IMR-90 (cell line): ENCODE measurements at regions of chr17 and their contacts with region 1.

Region 1: GRCh38 chr17:29379084-29379991 is 10.8 kb upstream of the TAOK1 start:
- DNase-seq: no peak
- ATAC-seq: no peak
- H3K4me3 ChIP-seq: no peak overlapping the region
- H3K27ac ChIP-seq: no peak overlapping the region
- H3K4me1 ChIP-seq: peaks cover 5% of the 10 kb centered on the region; the same call in 1 of the 2 replicates
- H3K27me3 ChIP-seq: no peaks in the 10 kb centered on the region
- CTCF ChIP-seq: no peak
- POLR2A ChIP-seq: no peak
- RAD21 ChIP-seq: no peak

Region 2: GRCh38 chr17:28265581-28266541 is 1113.5 kb before region 1 on chr17:
- CTCF ChIA-PET with region 1: no interaction called
- POLR2A ChIA-PET with region 1: interaction called, 18 read pairs
- dilution Hi-C with region 1: no loop called
- in situ Hi-C with region 1: no loop called
- intact Hi-C with region 1: no loop called
- DNase-seq: no peak
- ATAC-seq: no peak
- H3K4me3 ChIP-seq: no peak overlapping the region
- H3K27ac ChIP-seq: no peak overlapping the region
- H3K4me1 ChIP-seq: no peaks in the 10 kb centered on the region
- H3K27me3 ChIP-seq: peaks cover 7% of the 10 kb centered on the region
- CTCF ChIP-seq: no peak
- POLR2A ChIP-seq: no peak
- RAD21 ChIP-seq: no peak

Region 3: GRCh38 chr17:29157310-29157709 is 222.0 kb before region 1 on chr17:
- CTCF ChIA-PET with region 1: no interaction called
- POLR2A ChIA-PET with region 1: interaction called, 10 read pairs
- dilution Hi-C with region 1: no loop called
- in situ Hi-C with region 1: no loop called
- intact Hi-C with region 1: no loop called
- DNase-seq: no peak
- ATAC-seq: no peak
- H3K4me3 ChIP-seq: no peak overlapping the region
- H3K27ac ChIP-seq: peak overlapping the region; percentile 46; the same call in 1 of the 2 replicates
- H3K4me1 ChIP-seq: peaks cover 61% of the 10 kb centered on the region
- H3K27me3 ChIP-seq: no peaks in the 10 kb centered on the region
- CTCF ChIP-seq: no peak
- POLR2A ChIP-seq: no peak
- RAD21 ChIP-seq: no peak

Region 4: GRCh38 chr17:29212681-29213121 is 166.6 kb before region 1 on chr17:
- CTCF ChIA-PET with region 1: no interaction called
- POLR2A ChIA-PET with region 1: no interaction called
- dilution Hi-C with region 1: no loop called
- in situ Hi-C with region 1: no loop called
- intact Hi-C with region 1: no loop called
- DNase-seq: peak; percentile 6
- ATAC-seq: no peak
- H3K4me3 ChIP-seq: no peak overlapping the region
- H3K27ac ChIP-seq: no peak overlapping the region
- H3K4me1 ChIP-seq: peaks cover 2% of the 10 kb centered on the region; the same call in 1 of the 2 replicates
- H3K27me3 ChIP-seq: 0 out of 2 replicates have a peak, but pooled peaks cover 2% of the 10 kb centered on the region
- CTCF ChIP-seq: no peak
- POLR2A ChIP-seq: no peak
- RAD21 ChIP-seq: no peak

Region 5: DNA sequence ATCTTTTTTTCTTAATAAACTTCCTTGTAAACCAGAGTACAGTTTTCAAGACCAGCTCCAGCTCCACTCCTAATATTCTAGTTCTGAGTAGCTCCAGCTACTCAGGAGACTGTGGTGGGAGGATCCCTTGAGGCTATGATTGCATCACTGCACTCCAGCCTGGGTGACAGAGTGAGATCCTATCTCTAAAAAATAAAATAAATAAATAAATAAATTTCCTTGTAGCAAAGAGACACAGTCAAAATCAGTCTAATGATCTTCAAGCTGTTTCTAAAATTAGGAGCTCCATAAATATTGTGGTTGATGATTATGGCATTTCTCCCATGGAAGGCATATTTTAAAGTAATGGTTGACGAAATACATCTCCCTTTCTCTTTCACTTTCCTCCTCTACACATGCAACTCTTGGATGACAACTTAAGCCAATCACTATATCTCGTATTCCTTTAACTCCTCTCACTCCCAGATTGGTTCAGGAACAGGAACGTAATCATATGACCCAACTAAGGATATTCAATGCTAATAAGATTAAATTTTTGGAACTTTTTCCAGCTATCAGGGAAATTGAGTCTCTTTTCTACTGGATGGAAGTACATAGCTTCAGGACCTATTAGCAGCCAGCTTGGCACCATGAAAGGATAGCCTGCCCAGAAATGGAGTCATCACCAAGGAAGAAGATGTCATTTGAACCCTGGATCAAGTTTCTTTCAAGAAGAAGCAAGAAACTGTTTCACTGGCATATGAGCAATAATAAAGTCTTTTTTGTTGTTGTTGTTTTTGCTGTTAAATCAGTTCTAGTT is 31.3 kb before region 1 on chr17:
- CTCF ChIA-PET with region 1: no interaction called
- POLR2A ChIA-PET with region 1: no interaction called
- dilution Hi-C with region 1: no loop called
- in situ Hi-C with region 1: no loop called
- intact Hi-C with region 1: no loop called
- DNase-seq: no peak
- ATAC-seq: no peak; the same call in 1 of the 2 replicates
- H3K4me3 ChIP-seq: no peak overlapping the region
- H3K27ac ChIP-seq: no peak overlapping the region
- H3K4me1 ChIP-seq: no peaks in the 10 kb centered on the region
- H3K27me3 ChIP-seq: peaks cover 6% of the 10 kb centered on the region
- CTCF ChIP-seq: no peak
- POLR2A ChIP-seq: no peak
- RAD21 ChIP-seq: no peak